MCF 10A (cell line): ENCODE measurements at regions of chr5 and their contacts with region 1.

Region 1: GRCh38 chr5:15013654-15014463 is 142.3 kb upstream of the ANKH start:
- DNase-seq: peak; percentile 69
- H3K4me3 Mint-ChIP-seq: no peak overlapping the region
- H3K27ac Mint-ChIP-seq: no peak overlapping the region
- H3K4me1 Mint-ChIP-seq: peaks cover 14% of the 10 kb centered on the region
- H3K27me3 Mint-ChIP-seq: no peaks in the 10 kb centered on the region
- CTCF ChIP-seq: peak; percentile 56

Region 2: GRCh38 chr5:13976867-13977830 is 1036.7 kb before region 1 on chr5:
- CTCF ChIA-PET with region 1: no interaction called
- POLR2A ChIA-PET with region 1: no interaction called
- intact Hi-C with region 1: loop called (anchors 2 kb)
- DNase-seq: peak; percentile 64
- H3K4me3 Mint-ChIP-seq: no peak overlapping the region
- H3K27ac Mint-ChIP-seq: no peak overlapping the region
- H3K4me1 Mint-ChIP-seq: no peaks in the 10 kb centered on the region
- H3K27me3 Mint-ChIP-seq: peaks cover 8% of the 10 kb centered on the region
- CTCF ChIP-seq: peak; percentile 44

Region 3: DNA sequence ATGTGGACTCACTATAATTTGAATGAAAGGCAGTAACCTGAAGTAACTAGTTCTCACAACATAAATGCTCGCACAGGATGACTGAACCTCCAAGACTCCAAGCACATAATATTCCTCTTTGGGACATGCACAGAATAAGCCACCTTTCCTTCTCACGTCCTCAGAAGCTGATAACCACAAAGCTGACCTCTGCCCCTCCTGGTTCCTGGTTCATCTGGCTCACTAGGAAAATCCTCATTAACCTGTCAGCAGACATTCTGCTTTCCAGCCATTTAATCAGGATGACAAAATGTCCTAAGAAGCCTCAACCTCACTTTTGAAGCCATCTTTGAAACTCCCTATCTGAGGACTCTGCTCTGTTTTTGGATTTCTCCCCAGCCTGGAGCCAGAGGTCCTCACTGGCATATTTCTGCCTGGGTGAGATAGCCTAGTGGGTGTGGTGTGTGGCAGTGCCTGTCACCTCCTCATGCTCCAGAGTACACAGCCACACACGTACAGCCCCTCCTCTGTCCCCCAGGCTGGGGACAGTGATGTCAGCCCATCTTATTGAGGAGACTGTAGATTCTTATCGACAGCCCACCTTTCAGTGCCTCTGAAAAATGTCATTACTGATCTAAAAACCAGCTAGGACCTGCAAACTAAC is 152.6 kb before region 1 on chr5:
- CTCF ChIA-PET with region 1: no interaction called
- POLR2A ChIA-PET with region 1: no interaction called
- intact Hi-C with region 1: no loop called
- DNase-seq: no peak
- H3K4me3 Mint-ChIP-seq: no peak overlapping the region
- H3K27ac Mint-ChIP-seq: no peak overlapping the region
- H3K4me1 Mint-ChIP-seq: peaks cover 27% of the 10 kb centered on the region
- H3K27me3 Mint-ChIP-seq: no peaks in the 10 kb centered on the region
- CTCF ChIP-seq: no peak

Region 4: DNA sequence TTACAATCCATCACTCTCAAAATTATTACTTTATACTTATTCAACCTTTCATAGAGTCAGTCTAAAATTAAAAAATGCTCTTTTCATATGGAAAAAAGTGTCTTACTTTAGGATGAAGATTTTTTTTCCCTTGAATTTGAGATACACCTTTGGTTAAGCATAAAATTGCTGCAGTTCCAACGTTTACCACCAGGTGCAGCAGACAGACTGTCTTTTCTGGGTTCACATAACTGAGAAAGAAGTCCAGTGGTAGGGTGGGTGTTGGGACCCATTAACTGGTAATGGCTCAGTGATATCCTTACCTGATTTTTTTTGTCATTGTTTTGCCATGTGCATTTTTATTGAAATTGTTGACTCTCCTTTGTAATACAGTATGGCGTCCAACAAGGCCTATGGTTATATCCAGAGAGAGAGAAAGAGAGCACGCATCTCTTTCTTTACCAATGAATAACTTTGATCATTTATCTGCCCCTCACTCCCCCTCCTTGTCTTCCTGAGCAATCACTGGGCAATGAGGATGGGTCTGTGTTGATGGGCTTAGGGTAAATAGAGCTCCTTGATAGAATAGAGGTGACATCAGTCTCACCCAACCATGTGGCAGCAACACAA is 584.5 kb after region 1 on chr5:
- CTCF ChIA-PET with region 1: no interaction called
- POLR2A ChIA-PET with region 1: no interaction called
- intact Hi-C with region 1: no loop called
- DNase-seq: peak; percentile 44
- H3K4me3 Mint-ChIP-seq: no peak overlapping the region
- H3K27ac Mint-ChIP-seq: no peak overlapping the region
- H3K4me1 Mint-ChIP-seq: no peaks in the 10 kb centered on the region
- H3K27me3 Mint-ChIP-seq: no peaks in the 10 kb centered on the region
- CTCF ChIP-seq: peak; percentile 57